ENCODE measurements at regions of chr7 and their contacts with region 1.

Region 1: GRCh38 chr7:107168233-107169119 is at the start of gene HBP1:
- DNase-seq: peak; percentile 99
- H3K4me3 Mint-ChIP-seq: peak within 1 kb of the TSS; percentile 92
- H3K27ac Mint-ChIP-seq: peak within 1 kb of the TSS; percentile 98
- H3K4me1 Mint-ChIP-seq: peaks cover 26% of the 10 kb centered on the region
- H3K27me3 Mint-ChIP-seq: peaks cover 12% of the 10 kb centered on the region
- total RNA-seq, gene HBP1: 11.0 and 15.1 TPM in 2 replicates

Region 2: GRCh38 chr7:106285051-106285854 is 883.2 kb before region 1 on chr7:
- intact Hi-C with region 1: loop called (anchors 1 kb)
- DNase-seq: peak; percentile 99
- H3K4me3 Mint-ChIP-seq: peak overlapping the region; percentile 93
- H3K27ac Mint-ChIP-seq: peak overlapping the region; percentile 99
- H3K4me1 Mint-ChIP-seq: peaks cover 32% of the 10 kb centered on the region
- H3K27me3 Mint-ChIP-seq: no peaks in the 10 kb centered on the region

Region 3: GRCh38 chr7:106659963-106660861 is 508.3 kb before region 1 on chr7:
- intact Hi-C with region 1: loop called (anchors 2 kb)
- DNase-seq: peak; percentile 94
- H3K4me3 Mint-ChIP-seq: peak overlapping the region; percentile 88
- H3K27ac Mint-ChIP-seq: peak overlapping the region; percentile 94
- H3K4me1 Mint-ChIP-seq: peaks cover 27% of the 10 kb centered on the region
- H3K27me3 Mint-ChIP-seq: no peaks in the 10 kb centered on the region

Region 4: GRCh38 chr7:106865130-106866041 is 303.1 kb before region 1 on chr7 and contains the start of gene PIK3CG:
- intact Hi-C with region 1: loop called (anchors 2 kb)
- DNase-seq: peak; percentile 80
- H3K4me3 Mint-ChIP-seq: peak within 1 kb of the TSS; percentile 95
- H3K27ac Mint-ChIP-seq: peak within 1 kb of the TSS; percentile 93
- H3K4me1 Mint-ChIP-seq: peaks cover 42% of the 10 kb centered on the region
- H3K27me3 Mint-ChIP-seq: no peaks in the 10 kb centered on the region
- total RNA-seq, gene PIK3CG: 28.1 and 29.2 TPM in 2 replicates

Region 5: DNA sequence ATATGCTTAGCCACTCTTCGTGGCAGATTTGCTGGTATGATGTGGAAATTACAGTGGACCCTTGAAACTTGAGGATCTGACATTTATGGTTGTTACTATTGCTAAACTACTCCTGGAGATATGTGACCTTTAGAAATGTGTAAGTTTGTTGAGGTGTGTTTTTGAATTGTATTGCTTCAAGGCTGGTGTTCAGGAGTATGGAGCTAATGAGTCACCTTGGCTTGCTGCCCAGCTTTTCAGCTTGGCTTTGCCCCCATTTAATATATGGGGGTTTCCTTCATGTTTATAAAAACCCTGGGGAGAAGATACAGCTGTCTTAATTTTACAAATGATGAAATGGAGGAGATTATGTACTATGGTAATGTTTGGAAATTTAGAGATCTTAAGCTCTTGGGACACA is 11.9 kb after region 1 on chr7:
- intact Hi-C with region 1: loop called (anchors 1 kb)
- DNase-seq: no peak
- H3K4me3 Mint-ChIP-seq: peak overlapping the region; percentile 4
- H3K27ac Mint-ChIP-seq: peak overlapping the region; percentile 76
- H3K4me1 Mint-ChIP-seq: peaks cover 13% of the 10 kb centered on the region
- H3K27me3 Mint-ChIP-seq: no peaks in the 10 kb centered on the region

Region 6: DNA sequence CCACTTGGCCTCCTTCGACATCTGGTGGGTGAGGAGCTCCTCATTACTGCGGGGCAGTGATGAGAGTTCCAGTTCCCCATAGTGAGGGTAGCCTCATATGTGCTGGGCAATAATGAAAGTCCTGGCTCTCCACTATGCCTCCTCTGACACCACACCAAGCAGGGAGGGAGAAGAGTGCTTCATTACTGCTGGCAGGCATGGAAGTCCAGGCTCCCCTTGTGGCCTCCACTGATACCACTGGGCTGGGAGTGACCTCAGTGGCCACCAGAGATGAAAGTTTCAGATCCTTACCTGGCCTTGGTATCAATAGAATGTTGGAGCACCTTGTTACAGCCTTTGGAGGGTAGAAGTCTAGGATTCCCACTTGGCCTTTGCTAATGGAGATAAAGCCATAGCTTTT is 401.8 kb after region 1 on chr7:
- intact Hi-C with region 1: no loop called
- DNase-seq: peak; percentile 43
- H3K4me3 Mint-ChIP-seq: no peak overlapping the region
- H3K27ac Mint-ChIP-seq: no peak overlapping the region
- H3K4me1 Mint-ChIP-seq: peaks cover 4% of the 10 kb centered on the region
- H3K27me3 Mint-ChIP-seq: no peaks in the 10 kb centered on the region

Region 7: DNA sequence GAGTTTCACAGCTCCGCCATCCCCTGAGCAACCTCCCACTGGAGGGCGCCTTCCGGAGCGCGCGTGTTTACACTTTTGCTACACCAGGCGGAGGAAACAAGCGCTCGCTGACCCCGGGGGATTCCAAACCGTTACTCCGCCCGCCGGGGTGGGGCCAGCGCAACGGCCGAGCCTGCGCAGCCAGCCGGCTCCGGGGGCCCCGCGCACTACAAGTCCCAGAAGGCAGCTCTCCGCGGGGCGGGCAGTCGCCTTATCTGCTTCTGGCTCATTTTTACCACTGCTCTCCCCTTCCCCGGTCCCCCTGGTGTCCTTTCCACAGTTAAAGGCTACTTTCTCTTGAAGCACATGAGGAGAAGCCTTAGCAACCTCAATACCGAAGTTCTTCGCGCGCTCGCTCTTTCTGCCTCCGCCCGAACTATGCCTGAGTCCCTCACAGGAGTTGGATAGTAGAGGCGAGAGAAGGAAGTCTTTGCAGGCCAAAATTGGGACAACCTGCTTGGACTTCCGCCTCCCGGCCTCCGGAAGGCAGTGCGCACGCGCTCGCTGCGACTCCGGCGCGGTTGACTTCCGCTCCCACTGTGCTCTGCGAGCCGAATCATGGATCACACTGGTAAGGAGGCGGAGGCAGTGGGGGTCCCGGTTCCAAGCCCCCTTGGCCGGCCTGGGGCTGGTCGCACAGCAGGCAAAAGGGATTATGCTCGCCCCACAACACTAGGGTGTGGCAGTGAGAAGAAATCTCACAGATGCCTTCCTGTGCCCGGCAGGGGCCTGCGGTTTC is 575.3 kb after region 1 on chr7 and contains the start of gene CBLL1:
- intact Hi-C with region 1: loop called (anchors 1 kb)
- DNase-seq: peak; percentile 100
- H3K4me3 Mint-ChIP-seq: peak within 1 kb of the TSS; percentile 91
- H3K27ac Mint-ChIP-seq: peak within 1 kb of the TSS; percentile 99
- H3K4me1 Mint-ChIP-seq: peaks cover 25% of the 10 kb centered on the region
- H3K27me3 Mint-ChIP-seq: peaks cover 1% of the 10 kb centered on the region
- total RNA-seq, gene CBLL1: 48.7 and 50.7 TPM in 2 replicates

Measured in activated CD4-positive, alpha-beta T cell treated with anti-CD3 and anti-CD28 coated beads, Interleukin-2, amount 10 ng/mL, durations not matched to agents 24 days and 14 days (primary cell).